ENCODE measurements at regions of chr13 and their contacts with region 1.

Region 1: DNA sequence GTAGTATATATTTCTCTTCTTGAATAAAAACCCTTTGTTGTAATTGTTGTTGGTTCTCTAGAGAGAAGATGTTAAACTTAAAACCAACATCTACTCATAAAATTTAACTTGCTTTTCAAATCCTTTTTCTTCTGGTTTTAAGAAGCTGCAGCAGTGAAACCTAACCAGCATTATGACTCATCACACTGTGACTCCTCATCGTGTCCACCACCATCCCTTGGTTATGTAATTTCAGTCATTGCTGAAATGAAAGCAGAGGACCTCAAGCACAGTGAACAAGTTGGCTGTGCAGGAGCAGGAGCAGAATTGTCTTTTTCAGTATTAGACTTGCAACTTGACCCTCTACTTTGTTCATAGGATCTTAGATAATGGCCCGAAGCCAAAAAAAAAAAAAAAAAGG is 64.9 kb upstream of the HTR2A start:
- DNase-seq: peak; percentile 86
- ATAC-seq: peak; percentile 100
- H3K4me3 ChIP-seq: no peak overlapping the region
- H3K27ac ChIP-seq: no peak overlapping the region
- H3K4me1 ChIP-seq: peaks cover 16% of the 10 kb centered on the region
- H3K27me3 ChIP-seq: no peaks in the 10 kb centered on the region
- CTCF ChIP-seq: no peak
- EP300 ChIP-seq: peak; percentile 33 to 59; a peak in 1 of 4 replicates
- POLR2A ChIP-seq: no peak
- RAD21 ChIP-seq: peak; percentile 26; the same call in 1 of the 2 replicates

Region 2: GRCh38 chr13:46622630-46623256 is 339.0 kb before region 1 on chr13:
- CTCF ChIA-PET with region 1: no interaction called
- POLR2A ChIA-PET with region 1: no interaction called
- RAD21 ChIA-PET with region 1: no interaction called
- SMC1A ChIA-PET with region 1: no interaction called
- in situ Hi-C with region 1: no loop called
- intact Hi-C with region 1: no loop called
- DNase-seq: no peak
- ATAC-seq: peak; percentile 30
- H3K4me3 ChIP-seq: peak overlapping the region; percentile 1; the same call in 1 of the 2 replicates
- H3K27ac ChIP-seq: peak overlapping the region; percentile 55
- H3K4me1 ChIP-seq: peaks cover 61% of the 10 kb centered on the region
- H3K27me3 ChIP-seq: no peaks in the 10 kb centered on the region
- CTCF ChIP-seq: no peak
- EP300 ChIP-seq: no peak
- POLR2A ChIP-seq: no peak
- RAD21 ChIP-seq: no peak

Region 3: GRCh38 chr13:46855166-46855565 is 106.6 kb before region 1 on chr13:
- CTCF ChIA-PET with region 1: no interaction called
- POLR2A ChIA-PET with region 1: no interaction called
- RAD21 ChIA-PET with region 1: no interaction called
- SMC1A ChIA-PET with region 1: no interaction called
- in situ Hi-C with region 1: no loop called
- intact Hi-C with region 1: no loop called
- DNase-seq: no peak
- ATAC-seq: peak; percentile 49
- H3K4me3 ChIP-seq: no peak overlapping the region
- H3K27ac ChIP-seq: no peak overlapping the region
- H3K4me1 ChIP-seq: peaks cover 10% of the 10 kb centered on the region; the same call in 1 of the 2 replicates
- H3K27me3 ChIP-seq: no peaks in the 10 kb centered on the region
- CTCF ChIP-seq: no peak
- EP300 ChIP-seq: no peak
- POLR2A ChIP-seq: no peak
- RAD21 ChIP-seq: no peak

Region 4: DNA sequence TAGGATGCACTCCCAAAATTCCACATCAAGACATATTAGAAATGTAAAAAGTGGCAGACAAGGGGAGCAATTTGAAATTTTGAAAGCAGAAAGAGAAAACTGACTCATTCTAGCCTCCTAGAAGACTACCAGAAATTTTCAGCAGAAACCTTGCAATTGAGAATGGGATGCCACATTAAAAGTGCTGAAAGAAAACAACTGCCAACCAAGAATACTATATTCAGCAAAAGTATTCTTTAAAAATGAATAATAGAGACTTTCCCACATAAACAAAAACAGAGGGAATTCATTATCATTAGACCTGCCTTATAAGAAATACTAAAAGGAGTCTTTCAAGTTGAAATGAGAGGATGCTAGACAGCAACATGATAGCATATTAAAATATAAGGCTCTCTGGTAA is 13.5 kb after region 1 on chr13:
- CTCF ChIA-PET with region 1: interaction called, 51 read pairs
- POLR2A ChIA-PET with region 1: no interaction called
- RAD21 ChIA-PET with region 1: interaction called, 6 read pairs
- SMC1A ChIA-PET with region 1: interaction called, 4 read pairs
- in situ Hi-C with region 1: no loop called
- intact Hi-C with region 1: no loop called
- DNase-seq: no peak
- ATAC-seq: no peak
- H3K4me3 ChIP-seq: no peak overlapping the region
- H3K27ac ChIP-seq: no peak overlapping the region
- H3K4me1 ChIP-seq: no peaks in the 10 kb centered on the region; the same call in 1 of the 2 replicates
- H3K27me3 ChIP-seq: no peaks in the 10 kb centered on the region
- CTCF ChIP-seq: no peak
- EP300 ChIP-seq: no peak
- POLR2A ChIP-seq: no peak
- RAD21 ChIP-seq: no peak

Region 5: DNA sequence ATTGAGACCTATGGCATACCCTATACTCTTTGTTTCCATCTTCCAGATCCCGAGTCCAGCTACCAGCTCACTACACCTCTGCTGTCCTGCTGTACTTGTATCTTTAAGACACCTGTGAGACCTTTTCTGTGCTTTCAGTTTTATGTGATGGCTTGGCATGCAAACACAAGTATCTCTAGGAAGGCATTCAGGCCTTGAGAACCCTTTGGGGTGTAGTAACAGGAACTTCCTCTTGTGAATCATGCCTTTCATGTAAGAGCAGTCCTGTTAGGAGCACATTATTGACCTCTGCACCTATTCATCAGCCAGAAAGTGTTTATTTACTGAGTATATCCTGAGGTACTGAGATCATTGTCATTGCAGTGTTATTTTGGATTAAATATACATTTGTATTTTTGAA is 22.2 kb after region 1 on chr13:
- CTCF ChIA-PET with region 1: interaction called, 13 read pairs
- POLR2A ChIA-PET with region 1: no interaction called
- RAD21 ChIA-PET with region 1: no interaction called
- SMC1A ChIA-PET with region 1: interaction called, 4 read pairs
- in situ Hi-C with region 1: no loop called
- intact Hi-C with region 1: no loop called
- DNase-seq: peak; percentile 82
- ATAC-seq: peak; percentile 82
- H3K4me3 ChIP-seq: peak overlapping the region; percentile 10; the same call in 1 of the 2 replicates
- H3K27ac ChIP-seq: peak overlapping the region; percentile 82
- H3K4me1 ChIP-seq: peaks cover 32% of the 10 kb centered on the region
- H3K27me3 ChIP-seq: no peaks in the 10 kb centered on the region; a peak in 1 of 4 replicates
- CTCF ChIP-seq: no peak
- EP300 ChIP-seq: peak in 1 of 2 experiments; percentile 51; a peak in 1 of 4 replicates
- POLR2A ChIP-seq: no peak; the same call in 1 of the 2 replicates
- RAD21 ChIP-seq: peak; percentile 26; the same call in 1 of the 2 replicates

Region 6: DNA sequence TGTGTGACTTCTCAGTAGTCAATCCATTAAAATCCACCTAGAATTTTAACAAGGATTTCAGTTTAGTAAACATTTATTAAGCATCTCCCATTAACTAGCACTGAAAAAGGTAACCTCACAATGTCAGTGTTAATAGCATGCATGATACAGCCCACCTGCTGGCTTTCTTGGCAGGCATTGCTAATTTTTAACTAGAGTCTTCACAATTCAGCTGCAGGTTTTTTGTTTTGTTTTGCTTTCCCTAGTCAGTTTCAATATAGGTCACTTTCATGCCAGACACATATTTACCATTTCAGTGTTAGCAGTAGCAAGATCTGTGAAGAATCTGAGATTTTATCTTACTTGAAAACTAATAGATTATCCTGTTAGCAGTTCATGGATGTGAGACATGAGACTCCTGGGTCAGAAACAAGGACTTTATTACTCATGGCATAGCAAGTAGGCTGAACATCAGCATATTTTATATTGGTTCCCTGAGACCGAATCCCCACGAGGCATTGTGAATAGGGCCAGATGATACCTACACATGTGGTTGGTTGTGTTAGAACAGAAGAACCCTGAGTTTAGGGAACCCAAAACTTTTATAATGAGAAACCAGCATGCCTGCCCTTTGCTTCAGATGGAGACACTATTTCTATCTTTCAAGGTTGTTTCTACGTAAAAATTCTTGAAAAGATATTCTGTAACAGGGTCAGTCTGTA is 133.2 kb after region 1 on chr13:
- CTCF ChIA-PET with region 1: interaction called, 5 read pairs
- POLR2A ChIA-PET with region 1: no interaction called
- RAD21 ChIA-PET with region 1: no interaction called
- SMC1A ChIA-PET with region 1: interaction called, 3 read pairs
- in situ Hi-C with region 1: no loop called
- intact Hi-C with region 1: loop called (anchors 5 kb)
- DNase-seq: peak; percentile 48
- ATAC-seq: peak; percentile 91
- H3K4me3 ChIP-seq: no peak overlapping the region
- H3K27ac ChIP-seq: no peak overlapping the region
- H3K4me1 ChIP-seq: peaks cover 6% of the 10 kb centered on the region; the same call in 1 of the 2 replicates
- H3K27me3 ChIP-seq: no peaks in the 10 kb centered on the region
- CTCF ChIP-seq: no peak
- EP300 ChIP-seq: 0 out of 4 replicates have a peak, but pooled peaks of 1 of the 2 experiments have one; percentile 35
- POLR2A ChIP-seq: no peak
- RAD21 ChIP-seq: no peak

Region 7: GRCh38 chr13:47146991-47147811 is 185.5 kb after region 1 on chr13:
- CTCF ChIA-PET with region 1: no interaction called
- POLR2A ChIA-PET with region 1: no interaction called
- RAD21 ChIA-PET with region 1: no interaction called
- SMC1A ChIA-PET with region 1: no interaction called
- in situ Hi-C with region 1: no loop called
- intact Hi-C with region 1: loop called (anchors 1 kb)
- DNase-seq: peak; percentile 55
- ATAC-seq: peak; percentile 91
- H3K4me3 ChIP-seq: no peak overlapping the region
- H3K27ac ChIP-seq: no peak overlapping the region
- H3K4me1 ChIP-seq: peaks cover 6% of the 10 kb centered on the region; the same call in 1 of the 2 replicates
- H3K27me3 ChIP-seq: no peaks in the 10 kb centered on the region
- CTCF ChIP-seq: no peak
- EP300 ChIP-seq: no peak
- POLR2A ChIP-seq: no peak
- RAD21 ChIP-seq: no peak

Region 8: DNA sequence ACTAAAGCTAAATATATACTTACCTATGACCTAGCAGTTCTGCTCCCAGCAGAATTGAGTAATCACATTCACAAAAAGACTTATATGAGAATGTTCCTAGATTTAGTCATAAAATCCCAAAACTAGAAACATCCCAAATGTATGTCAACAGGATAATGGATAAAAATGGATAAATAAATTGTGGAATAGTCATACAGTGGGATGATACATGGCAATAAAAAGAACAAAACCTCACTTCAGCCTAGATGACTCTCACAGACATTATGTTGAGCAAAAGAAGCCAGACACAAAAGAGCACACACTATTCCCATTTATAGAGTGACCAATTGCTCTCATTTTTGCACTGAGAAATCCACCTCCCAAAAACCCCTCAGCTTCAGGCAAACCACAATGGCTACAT is 287.5 kb after region 1 on chr13:
- CTCF ChIA-PET with region 1: no interaction called
- POLR2A ChIA-PET with region 1: no interaction called
- RAD21 ChIA-PET with region 1: no interaction called
- SMC1A ChIA-PET with region 1: no interaction called
- in situ Hi-C with region 1: no loop called
- intact Hi-C with region 1: no loop called
- DNase-seq: no peak
- ATAC-seq: no peak
- H3K4me3 ChIP-seq: no peak overlapping the region
- H3K27ac ChIP-seq: no peak overlapping the region
- H3K4me1 ChIP-seq: no peaks in the 10 kb centered on the region
- H3K27me3 ChIP-seq: no peaks in the 10 kb centered on the region
- CTCF ChIP-seq: no peak
- EP300 ChIP-seq: no peak
- POLR2A ChIP-seq: no peak
- RAD21 ChIP-seq: no peak

Region 9: DNA sequence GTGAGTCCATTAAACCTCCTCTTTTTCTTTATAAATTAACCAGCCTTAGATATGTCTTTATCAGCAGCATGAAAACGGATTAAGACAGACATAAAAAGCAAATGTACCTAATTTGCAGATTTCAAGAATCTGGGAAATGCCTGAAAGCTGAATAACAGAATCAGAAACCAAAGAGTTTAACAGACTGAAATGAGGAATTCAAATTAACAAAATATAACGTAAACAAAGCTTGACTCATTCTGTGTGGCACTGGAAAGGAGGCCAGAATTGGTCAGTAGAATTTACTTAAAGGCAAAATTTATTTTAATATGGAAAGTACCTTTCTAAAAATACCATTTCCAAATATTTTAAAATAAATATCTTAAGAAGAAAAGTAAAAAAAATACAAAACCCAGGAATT is 475.7 kb after region 1 on chr13:
- CTCF ChIA-PET with region 1: no interaction called
- POLR2A ChIA-PET with region 1: no interaction called
- RAD21 ChIA-PET with region 1: no interaction called
- SMC1A ChIA-PET with region 1: no interaction called
- in situ Hi-C with region 1: no loop called
- intact Hi-C with region 1: loop called (anchors 10 kb)
- DNase-seq: no peak
- ATAC-seq: no peak
- H3K4me3 ChIP-seq: no peak overlapping the region
- H3K27ac ChIP-seq: no peak overlapping the region
- H3K4me1 ChIP-seq: no peaks in the 10 kb centered on the region
- H3K27me3 ChIP-seq: no peaks in the 10 kb centered on the region
- CTCF ChIP-seq: no peak
- EP300 ChIP-seq: no peak
- POLR2A ChIP-seq: no peak
- RAD21 ChIP-seq: no peak

Measured in GM12878 (cell line).